ENCODE measurements at regions of chr22 and their contacts with region 1.

Region 1: GRCh38 chr22:24845041-24845898 is 39.3 kb downstream of the SGSM1 start:
- DNase-seq: peak; percentile 72 to 91 (median 84)
- H3K4me3 ChIP-seq: no peak overlapping the region
- H3K27ac ChIP-seq: peak overlapping the region in 4 of 5 donors; percentile 14 to 76 (median 74)
- H3K4me1 ChIP-seq: peaks cover 8 to 10% of the 10 kb centered on the region in 2 donors
- H3K27me3 ChIP-seq: no peaks in the 10 kb centered on the region
- CTCF ChIP-seq: no peak
- POLR2A ChIP-seq: no peak

Region 2: GRCh38 chr22:24768537-24769374 is 76.5 kb before region 1 on chr22:
- intact Hi-C with region 1: loop called (anchors 5 kb)
- DNase-seq: peak; percentile 66 to 87 (median 78)
- H3K4me3 ChIP-seq: no peak overlapping the region
- H3K27ac ChIP-seq: no peak overlapping the region
- H3K4me1 ChIP-seq: no peaks in the 10 kb centered on the region
- H3K27me3 ChIP-seq: peaks cover 5% of the 10 kb centered on the region
- CTCF ChIP-seq: peak; percentile 49 to 84 (median 68)
- POLR2A ChIP-seq: no peak

Region 3: DNA sequence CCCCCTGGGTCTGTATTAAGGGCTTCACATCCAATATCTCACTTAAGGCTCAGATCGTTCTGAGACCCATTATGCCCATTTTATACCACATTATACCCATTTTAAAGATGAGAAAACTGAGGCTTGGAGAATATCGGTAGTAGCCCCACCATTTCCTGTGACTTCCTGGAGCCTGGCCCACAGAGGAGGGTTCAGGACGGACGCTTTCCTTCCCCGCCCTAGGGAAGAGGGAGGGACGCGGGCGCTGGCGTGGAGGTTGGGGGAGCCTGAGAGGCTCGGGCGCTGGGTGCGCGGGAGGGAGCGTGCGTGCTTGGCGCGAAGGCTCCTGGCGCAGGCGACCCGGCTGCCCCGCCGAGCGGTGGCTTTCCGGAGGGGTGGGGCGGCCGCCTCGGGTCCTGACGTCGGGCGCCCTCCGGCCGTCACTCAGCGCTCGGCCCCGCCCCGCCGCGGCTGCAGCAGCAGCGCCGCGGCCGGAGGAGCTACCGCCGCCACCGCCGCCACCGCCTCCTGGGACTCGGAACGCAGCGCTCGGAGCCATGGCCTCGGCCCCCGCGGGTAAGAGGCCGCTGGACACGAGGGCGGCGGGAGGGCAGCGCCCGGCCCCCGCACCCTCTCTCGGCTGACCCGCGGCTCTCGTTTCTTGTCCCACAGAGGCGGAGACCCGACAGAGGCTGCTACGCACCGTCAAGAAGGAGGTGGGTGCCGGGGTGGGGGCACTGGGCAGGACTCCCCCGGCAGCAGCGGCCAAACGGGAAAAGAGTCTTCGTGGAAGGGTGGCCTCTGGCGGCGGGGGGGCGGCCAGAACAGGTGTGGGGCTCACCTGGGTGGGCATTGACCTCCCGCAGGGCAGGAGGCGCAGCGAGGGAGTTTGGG is 39.2 kb before region 1 on chr22 and contains the start of gene SGSM1:
- intact Hi-C with region 1: loop called in 1 of 2 experiments (anchors 5 kb)
- DNase-seq: peak; percentile 78 to 89 (median 87)
- H3K4me3 ChIP-seq: peak within 1 kb of the TSS in 3 of 4 donors; percentile 33 to 84 (median 50)
- H3K27ac ChIP-seq: peak within 1 kb of the TSS in 3 of 5 donors; percentile 66 to 79 (median 77)
- H3K4me1 ChIP-seq: peaks cover 4 to 12% of the 10 kb centered on the region in 2 donors
- H3K27me3 ChIP-seq: no peaks in the 10 kb centered on the region
- CTCF ChIP-seq: no peak
- POLR2A ChIP-seq: peak; percentile 44 to 80
- total RNA-seq, gene SGSM1: 1.9 to 6.8 (median 3.6) TPM

Region 4: GRCh38 chr22:24996420-24996952 is 151.2 kb after region 1 on chr22:
- intact Hi-C with region 1: no loop called
- DNase-seq: peak in 4 of 7 donors; percentile 52 to 62 (median 58)
- H3K4me3 ChIP-seq: no peak overlapping the region
- H3K27ac ChIP-seq: peak overlapping the region in 4 of 5 donors; percentile 50 to 69 (median 64)
- H3K4me1 ChIP-seq: peaks cover 22 to 25% of the 10 kb centered on the region in 2 donors
- H3K27me3 ChIP-seq: no peaks in the 10 kb centered on the region
- CTCF ChIP-seq: no peak
- POLR2A ChIP-seq: peak in 1 of 2 donors; percentile 51

Measured in adrenal gland (tissue), 19 donors.